ENCODE measurements at regions of chr5 and their contacts with region 1.

Region 1: DNA sequence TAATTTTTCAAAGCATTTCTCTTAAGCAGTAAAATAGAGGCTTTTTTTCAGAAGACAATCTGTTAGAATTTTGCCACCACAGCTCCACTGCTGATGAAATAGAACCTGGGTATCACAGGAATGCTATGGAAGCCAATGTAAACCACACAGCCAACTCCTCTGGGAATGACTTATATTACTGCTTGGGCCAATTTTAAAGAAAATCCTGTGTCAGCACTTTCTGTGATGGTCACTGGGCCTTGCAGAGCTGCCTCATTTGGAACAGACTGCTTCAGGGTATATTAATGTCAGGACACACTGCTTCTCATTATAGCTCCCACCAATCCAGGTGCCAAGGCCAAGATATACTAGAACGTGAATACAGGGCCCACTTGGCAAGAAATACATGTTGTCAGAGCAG is 144.1 kb upstream of the ACTBL2 start:
- DNase-seq: no peak

Region 2: DNA sequence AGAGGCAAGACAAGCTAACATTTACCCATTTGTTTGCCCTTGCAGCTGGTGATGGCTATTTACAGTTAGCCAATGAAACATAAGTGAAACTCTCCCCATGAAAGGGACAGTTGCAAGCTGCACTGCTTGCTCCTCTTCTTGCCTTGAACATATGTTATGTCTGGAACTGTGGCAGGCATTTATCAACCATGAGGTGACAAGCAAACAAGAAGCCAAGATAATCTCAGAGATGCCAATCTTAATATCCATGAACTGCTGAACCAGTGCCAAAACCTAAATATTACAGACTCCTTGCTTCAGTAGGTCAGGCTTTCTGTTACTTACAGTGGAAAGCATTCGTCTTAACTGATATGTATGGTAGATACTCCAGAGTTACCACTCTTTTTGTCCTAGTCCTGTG is 277.5 kb before region 1 on chr5:
- intact Hi-C with region 1: loop called (anchors 10 kb)
- DNase-seq: no peak

Region 3: GRCh38 chr5:57366744-57367143 is 260.0 kb before region 1 on chr5:
- intact Hi-C with region 1: no loop called
- DNase-seq: no peak

Region 4: DNA sequence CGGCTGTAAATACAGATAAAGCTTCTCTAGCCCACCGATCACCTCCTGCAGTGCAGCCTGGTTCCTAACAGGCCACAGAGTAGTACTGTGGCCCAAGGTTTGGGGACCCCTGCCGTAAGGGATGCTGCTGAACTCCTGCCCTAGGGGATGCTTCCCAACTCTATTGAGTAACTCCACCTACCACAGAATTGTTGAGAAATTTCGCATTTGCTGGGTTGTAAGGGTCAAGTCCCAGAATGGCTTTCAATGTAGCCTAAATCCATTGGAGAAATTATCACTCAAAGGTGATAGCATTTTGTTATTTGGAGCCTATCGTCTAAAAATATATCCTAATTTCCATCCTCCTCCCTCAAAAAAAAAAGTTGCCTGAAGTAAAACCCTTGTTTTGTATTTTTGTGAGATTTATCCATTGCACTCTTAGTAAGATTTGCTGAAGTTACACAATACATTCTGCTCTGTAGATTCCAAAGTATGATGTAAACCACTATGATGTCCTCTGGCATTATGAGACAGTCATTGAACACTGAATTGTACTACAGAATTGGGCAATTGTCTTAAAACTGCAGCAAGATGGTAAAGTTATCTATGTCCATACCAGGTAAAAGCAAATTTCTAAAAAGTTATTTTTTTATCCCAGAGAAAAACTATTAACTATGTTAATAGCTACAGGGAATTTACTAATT is 158.1 kb before region 1 on chr5:
- intact Hi-C with region 1: no loop called
- DNase-seq: no peak

Measured in cardiac septum (tissue), 1 donor.